Sciatic nerve (tissue), 2 donors: ENCODE measurements at regions of chr12 and their contacts with region 1.

Region 1: GRCh38 chr12:75526655-75527511 is 15.5 kb upstream of the KRR1 start:
- DNase-seq: no peak
- ATAC-seq: no peak

Region 2: DNA sequence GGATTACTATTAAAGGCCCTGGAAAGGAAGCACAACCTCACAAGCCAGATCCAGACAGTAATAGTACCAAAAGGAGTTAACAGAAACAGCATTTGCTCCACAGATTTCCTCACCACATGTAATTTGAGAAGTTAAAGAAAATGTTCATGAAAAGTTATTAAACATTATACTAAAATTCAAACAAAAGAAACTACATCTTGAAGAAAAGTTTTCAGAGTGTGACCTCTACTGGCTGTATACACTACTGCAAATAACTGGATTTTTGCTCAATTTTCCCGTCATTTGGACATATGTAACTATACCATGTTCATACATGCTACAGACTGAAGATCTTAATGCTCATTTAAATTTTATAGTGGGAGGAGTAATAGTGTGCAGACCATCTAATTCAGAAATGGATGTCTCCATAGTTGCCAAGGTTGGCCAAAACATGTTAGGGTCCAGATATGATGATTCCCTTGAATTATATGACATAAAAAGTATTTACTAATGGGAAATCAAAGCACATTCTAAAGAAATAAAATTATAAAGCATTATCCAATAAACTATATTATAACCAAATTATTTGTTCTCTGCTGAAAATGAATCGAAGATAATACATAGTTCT is 21.1 kb before region 1 on chr12:
- intact Hi-C with region 1: no loop called
- DNase-seq: no peak
- ATAC-seq: no peak

Region 3: DNA sequence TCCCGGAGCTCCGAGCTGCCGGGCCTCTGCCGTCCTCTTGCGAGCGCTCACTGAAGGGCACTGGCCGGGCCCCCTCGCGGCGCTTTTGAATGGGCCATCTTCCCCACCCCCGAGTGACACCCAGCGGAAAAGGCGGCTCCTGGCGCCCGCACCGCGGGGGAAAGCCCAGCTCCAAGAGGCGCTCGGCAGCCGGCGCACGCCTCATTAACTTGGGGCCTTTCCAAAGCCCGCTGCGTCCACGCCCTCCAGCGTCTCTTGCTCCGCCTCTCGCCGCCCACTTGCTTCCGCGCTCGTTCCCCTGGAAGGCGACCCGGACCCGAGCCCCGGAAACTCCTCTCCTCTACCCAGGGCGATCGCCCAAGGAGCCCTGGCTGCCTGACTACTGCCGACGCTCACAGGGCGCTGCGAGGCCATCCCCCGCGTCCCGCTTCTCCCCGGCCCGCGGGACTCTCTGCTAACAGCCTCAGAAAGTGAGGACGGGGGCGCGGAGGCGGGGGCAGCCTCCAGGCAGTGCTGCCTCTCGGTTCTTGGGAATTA is 504.7 kb after region 1 on chr12 and contains the start of gene PHLDA1:
- intact Hi-C with region 1: loop called (anchors 10 kb)
- DNase-seq: peak; percentile 97
- ATAC-seq: peak; percentile 94
- total RNA-seq, gene PHLDA1: 34.2 TPM